B cell (primary cell): ENCODE measurements at regions of chr1 and their contacts with region 1.

Region 1: DNA sequence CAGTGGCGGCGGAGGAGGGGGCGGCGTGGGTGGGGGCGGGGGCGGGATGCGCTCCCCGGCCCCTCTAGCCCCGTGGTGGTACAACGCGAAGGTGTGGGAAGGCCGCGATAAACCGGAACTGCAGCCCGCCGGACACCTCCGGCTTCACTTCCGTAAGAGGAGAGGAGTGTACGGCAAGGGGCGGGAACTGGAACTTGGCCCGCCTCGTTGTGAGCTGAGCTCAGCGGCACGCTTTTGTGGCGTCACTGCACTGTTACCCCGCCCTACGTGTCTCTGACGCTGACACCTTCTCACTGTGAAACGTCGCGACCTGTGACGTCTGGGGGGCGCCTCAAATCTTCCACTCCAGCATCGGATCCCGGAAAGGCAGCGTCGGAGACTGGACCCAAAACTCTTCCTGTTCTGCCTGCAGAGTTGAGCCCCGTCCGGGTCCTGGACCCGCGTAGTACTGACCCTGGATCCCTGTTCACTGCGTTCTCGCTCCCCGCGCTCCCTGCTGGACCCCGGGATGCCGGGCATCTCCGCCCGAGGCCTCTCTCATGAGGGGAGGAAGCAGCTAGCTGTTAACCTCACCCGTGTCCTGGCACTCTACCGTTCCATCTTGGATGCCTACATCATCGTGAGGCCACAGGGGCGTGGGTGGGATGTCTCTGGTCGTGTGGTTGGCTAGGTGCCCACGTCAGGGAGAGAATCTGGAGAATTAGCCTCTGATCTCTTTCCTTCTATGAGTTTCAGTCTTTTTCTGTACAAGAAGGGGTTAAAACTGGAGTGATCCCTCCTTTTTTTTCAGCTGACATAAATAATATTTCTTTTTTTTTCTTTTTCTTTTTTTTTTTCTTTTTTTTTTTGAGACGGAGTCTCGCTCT is at the start of gene ISG20L2:
- DNase-seq: peak; percentile 98
- ATAC-seq: peak; percentile 91
- H3K4me3 ChIP-seq: peak within 1 kb of the TSS; percentile 79 to 98 (median 95)
- H3K4me3 Mint-ChIP-seq: no peak within 1 kb of the TSS
- H3K27ac ChIP-seq: peak within 1 kb of the TSS; percentile 77 to 96
- H3K27ac Mint-ChIP-seq: peak within 1 kb of the TSS; percentile 98
- H3K4me1 ChIP-seq: peaks cover 40 to 48% of the 10 kb centered on the region in 2 donors
- H3K4me1 Mint-ChIP-seq: peaks cover 23% of the 10 kb centered on the region
- H3K27me3 ChIP-seq: no peaks in the 10 kb centered on the region
- H3K27me3 Mint-ChIP-seq: no peaks in the 10 kb centered on the region
- CTCF ChIP-seq: no peak
- total RNA-seq, gene ISG20L2: 51.7 and 52.5 TPM in 2 replicates

Region 2: GRCh38 chr1:156625436-156626078 is 103.3 kb before region 1 on chr1:
- CTCF ChIA-PET with region 1: interaction called, 17 read pairs
- POLR2A ChIA-PET with region 1: no interaction called
- intact Hi-C with region 1: loop called (anchors 2 kb)
- DNase-seq: peak; percentile 86
- ATAC-seq: peak; percentile 75
- H3K4me3 ChIP-seq: peak overlapping the region in 4 of 5 experiments; percentile 19 to 50 (median 47)
- H3K4me3 Mint-ChIP-seq: peak overlapping the region; percentile 84
- H3K27ac ChIP-seq: no peak overlapping the region
- H3K27ac Mint-ChIP-seq: peak overlapping the region; percentile 2
- H3K4me1 ChIP-seq: peaks cover 22 to 26% of the 10 kb centered on the region in 2 donors
- H3K4me1 Mint-ChIP-seq: peaks cover 15% of the 10 kb centered on the region
- H3K27me3 ChIP-seq: peaks cover 2 to 66% (median 27%) of the 10 kb centered on the region in 4 experiments
- H3K27me3 Mint-ChIP-seq: peaks cover 49% of the 10 kb centered on the region
- CTCF ChIP-seq: peak; percentile 91

Region 3: GRCh38 chr1:156677616-156678596 is 50.9 kb before region 1 on chr1:
- CTCF ChIA-PET with region 1: interaction called, 13 read pairs
- POLR2A ChIA-PET with region 1: interaction called, 4 read pairs
- intact Hi-C with region 1: no loop called
- DNase-seq: peak; percentile 78
- ATAC-seq: no peak
- H3K4me3 ChIP-seq: peak overlapping the region in 1 of 5 experiments; percentile 24
- H3K4me3 Mint-ChIP-seq: peak overlapping the region; percentile 53
- H3K27ac ChIP-seq: no peak overlapping the region
- H3K27ac Mint-ChIP-seq: peak overlapping the region; percentile 57
- H3K4me1 ChIP-seq: peaks cover 25 to 32% of the 10 kb centered on the region in 2 donors
- H3K4me1 Mint-ChIP-seq: peaks cover 25% of the 10 kb centered on the region
- H3K27me3 ChIP-seq: peaks cover 0 to 83% (median 47%) of the 10 kb centered on the region in 4 experiments
- H3K27me3 Mint-ChIP-seq: peaks cover 52% of the 10 kb centered on the region
- CTCF ChIP-seq: peak; percentile 67

Region 4: GRCh38 chr1:156705918-156706656 is 22.7 kb before region 1 on chr1:
- CTCF ChIA-PET with region 1: interaction called, 28 read pairs
- POLR2A ChIA-PET with region 1: interaction called, 7 read pairs
- intact Hi-C with region 1: no loop called
- DNase-seq: peak; percentile 79
- ATAC-seq: peak; percentile 68
- H3K4me3 ChIP-seq: peak overlapping the region in 4 of 5 experiments; percentile 54 to 70 (median 58)
- H3K4me3 Mint-ChIP-seq: peak overlapping the region; percentile 89
- H3K27ac ChIP-seq: no peak overlapping the region
- H3K27ac Mint-ChIP-seq: no peak overlapping the region
- H3K4me1 ChIP-seq: peaks cover 28% of the 10 kb centered on the region in 2 donors
- H3K4me1 Mint-ChIP-seq: peaks cover 32% of the 10 kb centered on the region
- H3K27me3 ChIP-seq: peaks cover 3 to 51% (median 31%) of the 10 kb centered on the region in 4 experiments
- H3K27me3 Mint-ChIP-seq: peaks cover 20% of the 10 kb centered on the region
- CTCF ChIP-seq: peak; percentile 82

Region 5: DNA sequence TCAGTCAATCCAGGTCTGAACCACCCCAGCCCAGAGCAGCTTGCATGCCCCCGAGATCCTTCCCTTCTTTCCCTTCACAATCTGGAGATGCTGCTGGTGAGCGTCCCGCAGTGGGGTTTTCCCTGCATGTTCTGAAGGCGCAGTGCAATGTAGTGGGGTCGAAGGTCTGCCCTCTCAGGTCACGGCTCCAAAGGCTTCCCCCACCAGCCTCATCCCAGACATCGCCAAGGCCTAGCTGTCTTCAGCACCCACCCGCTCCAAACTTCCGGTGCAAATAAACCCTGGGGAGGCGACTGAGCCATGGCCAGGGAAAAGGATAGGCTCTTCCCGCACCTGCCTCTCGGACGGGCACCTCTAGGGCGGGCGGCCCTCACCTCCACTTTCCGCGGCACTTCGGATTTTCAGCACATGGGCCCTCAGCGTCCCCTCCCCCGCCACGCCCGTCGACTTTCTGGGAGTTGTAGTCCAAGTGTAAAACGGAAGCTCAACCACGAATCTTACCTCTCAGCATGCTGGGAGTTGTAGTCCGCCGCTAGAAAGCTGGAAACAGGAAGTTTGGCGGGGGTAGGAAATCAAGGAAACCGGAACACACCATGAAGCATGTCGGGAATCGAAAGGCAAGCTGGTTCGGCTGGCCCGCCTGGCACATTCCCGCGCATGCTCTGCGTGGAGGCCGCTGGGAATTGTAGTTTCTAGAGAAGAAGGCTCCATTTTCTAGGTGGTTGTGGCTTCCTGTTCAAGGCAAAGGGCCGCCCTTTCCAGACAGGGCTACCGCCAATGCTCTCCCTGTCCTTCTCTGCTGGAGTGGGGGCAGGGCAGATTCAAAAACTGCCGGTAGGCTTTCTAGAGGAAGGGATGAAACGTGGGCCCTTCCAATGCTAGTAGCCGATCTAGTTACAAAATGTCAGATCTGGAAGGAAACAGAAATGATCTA is 12.1 kb after region 1 on chr1 and contains the start of gene MRPL24:
- CTCF ChIA-PET with region 1: interaction called, 43 read pairs
- POLR2A ChIA-PET with region 1: interaction called, 39 read pairs
- intact Hi-C with region 1: loop called (anchors 1 kb)
- DNase-seq: peak; percentile 98
- ATAC-seq: peak; percentile 90
- H3K4me3 ChIP-seq: peak within 1 kb of the TSS; percentile 45 to 85 (median 71)
- H3K4me3 Mint-ChIP-seq: peak within 1 kb of the TSS; percentile 96
- H3K27ac ChIP-seq: peak within 1 kb of the TSS; percentile 77 to 95
- H3K27ac Mint-ChIP-seq: peak within 1 kb of the TSS; percentile 98
- H3K4me1 ChIP-seq: peaks cover 15 to 21% of the 10 kb centered on the region in 2 donors
- H3K4me1 Mint-ChIP-seq: peaks cover 37% of the 10 kb centered on the region
- H3K27me3 ChIP-seq: no peaks in the 10 kb centered on the region
- H3K27me3 Mint-ChIP-seq: no peaks in the 10 kb centered on the region
- CTCF ChIP-seq: no peak
- total RNA-seq, gene MRPL24: 34.6 and 41.1 TPM in 2 replicates

Region 6: GRCh38 chr1:156767101-156767878 is 38.5 kb after region 1 on chr1 and contains the start of gene PRCC:
- CTCF ChIA-PET with region 1: interaction called, 87 read pairs
- POLR2A ChIA-PET with region 1: interaction called, 24 read pairs
- intact Hi-C with region 1: loop called (anchors 1 kb)
- DNase-seq: peak; percentile 99
- ATAC-seq: peak; percentile 89
- H3K4me3 ChIP-seq: peak within 1 kb of the TSS; percentile 76 to 97 (median 86)
- H3K4me3 Mint-ChIP-seq: no peak within 1 kb of the TSS
- H3K27ac ChIP-seq: peak within 1 kb of the TSS; percentile 91 to 97
- H3K27ac Mint-ChIP-seq: no peak within 1 kb of the TSS
- H3K4me1 ChIP-seq: peaks cover 27 to 29% of the 10 kb centered on the region in 2 donors
- H3K4me1 Mint-ChIP-seq: peaks cover 30% of the 10 kb centered on the region
- H3K27me3 ChIP-seq: no peaks in the 10 kb centered on the region
- H3K27me3 Mint-ChIP-seq: no peaks in the 10 kb centered on the region
- CTCF ChIP-seq: no peak
- total RNA-seq, gene PRCC: 83.4 and 91.0 TPM in 2 replicates

Region 7: GRCh38 chr1:156959414-156959813 is 230.6 kb after region 1 on chr1:
- CTCF ChIA-PET with region 1: no interaction called
- POLR2A ChIA-PET with region 1: no interaction called
- intact Hi-C with region 1: no loop called
- DNase-seq: no peak
- ATAC-seq: no peak
- H3K4me3 ChIP-seq: no peak overlapping the region
- H3K4me3 Mint-ChIP-seq: no peak overlapping the region
- H3K27ac ChIP-seq: no peak overlapping the region
- H3K27ac Mint-ChIP-seq: no peak overlapping the region
- H3K4me1 ChIP-seq: peaks cover 16 to 19% of the 10 kb centered on the region in 2 donors
- H3K4me1 Mint-ChIP-seq: peaks cover 26% of the 10 kb centered on the region
- H3K27me3 ChIP-seq: peaks cover 0 to 4% (median 0%) of the 10 kb centered on the region in 4 experiments
- H3K27me3 Mint-ChIP-seq: no peaks in the 10 kb centered on the region
- CTCF ChIP-seq: no peak